ENCODE measurements at regions of chr14 and their contacts with region 1.

Region 1: DNA sequence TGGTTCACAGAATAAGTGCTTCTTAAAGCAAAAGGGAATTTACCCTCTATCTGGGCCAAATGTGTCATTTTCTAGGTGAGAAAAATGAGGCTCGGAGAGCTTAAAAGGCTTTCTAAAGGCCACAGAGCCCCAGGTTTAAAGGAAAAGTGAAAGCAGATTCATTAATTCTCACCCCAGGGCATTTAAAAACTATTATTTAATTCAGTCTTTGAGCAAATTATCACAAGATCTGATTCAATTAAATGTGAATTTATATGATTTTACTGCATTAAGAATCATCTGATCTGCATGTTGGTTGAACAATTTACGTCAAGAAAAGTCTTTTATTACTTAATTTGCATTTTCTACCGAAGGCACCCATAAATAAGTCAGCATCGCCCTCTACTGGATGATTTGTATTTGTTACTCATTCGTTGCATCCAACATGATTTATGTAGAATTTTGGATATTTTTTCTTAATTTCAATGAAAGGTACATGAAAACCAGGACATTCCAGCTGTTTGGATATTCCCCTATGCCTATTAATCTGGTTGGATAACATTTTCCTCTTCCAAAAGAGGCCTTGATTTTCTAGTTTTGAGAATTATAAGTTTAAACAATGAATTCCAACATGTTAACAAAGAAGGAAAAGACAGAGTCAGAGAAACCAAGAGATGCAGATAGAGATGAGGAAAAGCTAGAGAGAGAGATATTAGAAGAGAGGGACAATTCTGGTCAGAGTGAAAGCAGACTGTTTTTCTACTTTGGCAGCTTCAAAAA is 19.1 kb upstream of the DHRS7 start:
- DNase-seq: no peak
- ATAC-seq: peak in 2 of 4 donors; percentile 30 to 53
- H3K4me3 ChIP-seq: peak overlapping the region; percentile 65
- H3K27ac ChIP-seq: peak overlapping the region; percentile 69
- H3K4me1 ChIP-seq: peaks cover 28% of the 10 kb centered on the region
- H3K27me3 ChIP-seq: no peaks in the 10 kb centered on the region
- CTCF ChIP-seq: peak; percentile 91

Region 2: DNA sequence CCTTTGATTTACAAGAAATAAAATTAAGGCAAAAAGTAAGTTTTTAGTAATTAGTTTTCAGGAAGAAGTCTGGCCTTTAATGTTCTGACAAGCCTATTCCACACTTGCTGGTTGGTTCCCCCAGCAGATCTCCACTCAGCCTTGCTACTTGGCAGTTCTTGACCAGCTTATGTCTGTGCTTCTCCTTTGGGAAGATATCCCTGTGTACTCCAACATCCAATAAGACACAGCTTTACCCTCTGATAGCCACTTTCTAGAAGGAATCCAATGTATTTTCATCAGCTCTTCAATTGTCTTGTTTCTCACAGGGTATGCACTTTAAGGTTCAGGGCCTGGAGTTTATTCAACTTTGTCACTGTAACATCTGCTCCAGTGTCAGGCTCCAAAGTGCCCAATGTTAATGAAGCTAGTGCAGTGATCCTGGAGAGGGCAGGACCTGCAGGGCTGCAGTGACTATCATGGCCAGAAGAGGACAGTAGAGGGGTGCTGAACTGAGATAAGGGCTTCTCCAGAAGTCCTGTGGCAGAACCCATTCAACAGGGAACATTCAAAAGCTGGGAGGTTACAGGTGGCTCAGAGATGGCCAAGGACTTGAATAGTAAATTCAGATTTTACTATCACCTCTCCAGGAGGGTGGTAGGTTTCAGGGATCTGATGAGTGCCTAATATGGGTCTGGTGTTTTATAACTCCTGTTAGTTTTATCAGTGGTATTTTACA is 677.1 kb before region 1 on chr14:
- intact Hi-C with region 1: loop called in 1 of 2 experiments (anchors 10 kb)
- DNase-seq: peak in 1 of 2 donors; percentile 23
- ATAC-seq: peak; percentile 61 to 92 (median 81)
- H3K4me3 ChIP-seq: no peak overlapping the region
- H3K27ac ChIP-seq: no peak overlapping the region
- H3K4me1 ChIP-seq: no peaks in the 10 kb centered on the region
- H3K27me3 ChIP-seq: no peaks in the 10 kb centered on the region
- CTCF ChIP-seq: peak; percentile 76

Region 3: DNA sequence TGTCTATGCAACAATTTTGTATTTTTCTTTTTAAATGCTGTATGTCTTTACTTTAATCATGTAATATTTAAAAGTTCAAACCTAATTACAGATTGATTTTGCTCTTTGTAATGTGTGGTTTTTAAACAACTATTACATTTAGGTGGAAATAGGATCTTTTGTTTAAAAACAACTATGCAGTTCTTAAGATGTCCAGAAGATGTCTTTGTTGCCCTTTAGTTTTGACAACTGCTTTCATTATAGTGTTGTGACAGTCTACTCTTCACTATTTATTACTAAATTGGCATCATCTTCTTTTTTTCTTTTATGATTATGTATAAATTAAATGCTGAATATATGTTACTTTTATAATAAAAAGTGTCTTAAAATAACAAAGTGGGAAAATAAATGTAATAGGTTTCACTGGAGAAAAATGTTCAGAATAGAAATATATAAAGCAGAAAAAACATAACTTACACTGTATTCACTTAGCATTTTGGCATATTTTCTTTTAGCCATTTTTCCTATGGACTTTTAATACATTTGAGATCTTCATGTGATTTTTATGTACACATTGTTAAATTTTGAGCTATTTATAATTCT is 119.7 kb before region 1 on chr14:
- intact Hi-C with region 1: loop called (anchors 2 kb)
- DNase-seq: no peak
- ATAC-seq: peak in 3 of 4 donors; percentile 67 to 92 (median 75)
- H3K4me3 ChIP-seq: no peak overlapping the region
- H3K27ac ChIP-seq: no peak overlapping the region
- H3K4me1 ChIP-seq: no peaks in the 10 kb centered on the region
- H3K27me3 ChIP-seq: no peaks in the 10 kb centered on the region
- CTCF ChIP-seq: peak; percentile 78